Natural killer cell (primary cell): ENCODE measurements at regions of chr4 and their contacts with region 1.

Region 1: DNA sequence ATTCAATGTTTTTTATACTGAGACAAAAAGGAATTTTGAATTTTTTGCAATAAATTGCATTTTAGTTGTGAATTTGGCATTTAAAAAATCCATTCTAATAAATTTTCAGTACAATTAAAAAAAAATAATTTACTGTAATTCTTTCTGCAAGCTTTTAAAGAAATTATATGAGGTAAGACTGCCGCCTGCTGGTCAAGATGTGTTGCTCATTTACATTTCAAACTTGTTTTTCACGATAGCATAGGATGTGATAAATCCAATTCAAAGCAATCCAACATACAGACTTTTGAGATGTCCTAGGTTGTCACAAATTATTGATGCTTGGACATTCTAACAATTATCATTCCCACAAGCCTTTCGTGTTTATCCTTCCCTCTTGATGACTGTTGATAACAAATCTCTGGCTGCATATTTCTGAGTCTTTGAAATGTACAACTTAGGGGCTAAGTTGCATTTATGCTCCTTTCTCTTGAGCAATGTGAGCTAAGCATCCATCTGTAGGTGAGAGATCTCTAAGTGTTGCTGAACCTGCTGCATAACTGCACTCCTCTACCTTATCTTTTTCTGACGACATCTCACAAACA is 21.7 kb upstream of the MFAP3L start:
- DNase-seq: peak; percentile 31 to 80
- ATAC-seq: peak; percentile 54 to 60 (median 55)
- H3K4me3 ChIP-seq: no peak overlapping the region
- H3K4me3 Mint-ChIP-seq: no peak overlapping the region
- H3K27ac ChIP-seq: no peak overlapping the region
- H3K27ac Mint-ChIP-seq: no peak overlapping the region
- H3K4me1 ChIP-seq: no peaks in the 10 kb centered on the region
- H3K4me1 Mint-ChIP-seq: no peaks in the 10 kb centered on the region
- H3K27me3 ChIP-seq: no peaks in the 10 kb centered on the region
- H3K27me3 Mint-ChIP-seq: peaks cover 5 to 10% of the 10 kb centered on the region in 2 donors
- CTCF ChIP-seq: peak; percentile 79

Region 2: DNA sequence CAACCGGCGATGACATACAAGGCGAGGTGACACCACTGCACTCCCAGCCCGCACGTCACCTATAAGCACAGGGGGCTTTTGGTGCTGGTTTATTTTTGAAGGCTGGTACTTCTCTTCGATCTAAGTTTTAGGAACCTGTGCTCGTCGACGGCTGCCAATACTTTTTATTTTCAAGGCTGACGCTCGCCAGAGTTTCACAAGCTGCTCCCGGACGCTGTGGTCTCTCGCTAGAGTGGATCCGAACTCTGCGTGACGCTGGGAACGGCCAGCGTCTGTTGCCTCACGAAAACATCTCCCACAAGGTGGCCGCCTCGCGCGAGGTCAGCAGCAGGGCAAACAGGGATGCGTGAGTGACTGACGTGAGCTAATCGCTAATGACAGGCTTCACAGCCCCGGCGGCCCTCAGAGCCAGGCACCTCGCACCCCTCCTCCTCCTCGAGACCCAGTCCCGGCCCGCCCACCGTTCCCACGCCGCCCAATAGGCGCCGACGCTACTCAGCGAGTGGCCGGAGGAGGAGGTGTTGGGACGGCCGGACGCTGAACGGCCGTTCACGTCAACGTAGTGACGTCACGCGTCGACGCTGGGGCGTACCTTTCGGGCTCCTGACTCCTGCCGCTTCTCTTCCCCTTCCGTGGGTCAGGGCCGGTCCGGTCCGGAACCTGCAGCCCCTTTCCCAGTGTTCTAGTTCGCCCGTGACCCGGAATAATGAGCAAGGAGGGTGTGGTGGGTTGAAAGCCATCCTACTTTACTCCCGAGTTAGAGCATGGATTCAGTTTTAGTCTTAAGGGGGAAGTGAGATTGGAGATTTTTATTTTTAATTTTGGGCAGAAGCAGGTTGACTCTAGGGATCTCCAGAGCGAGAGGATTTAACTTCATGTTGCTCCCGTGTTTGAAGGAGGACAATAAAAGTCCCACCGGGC is 427.6 kb before region 1 on chr4 and contains the start of gene CLCN3:
- intact Hi-C with region 1: no loop called
- DNase-seq: peak; percentile 94
- ATAC-seq: peak; percentile 81 to 94 (median 86)
- H3K4me3 ChIP-seq: peak within 1 kb of the TSS; percentile 63
- H3K4me3 Mint-ChIP-seq: peak within 1 kb of the TSS; percentile 95
- H3K27ac ChIP-seq: peak within 1 kb of the TSS; percentile 97
- H3K27ac Mint-ChIP-seq: peak within 1 kb of the TSS; percentile 99 to 100
- H3K4me1 ChIP-seq: peaks cover 9% of the 10 kb centered on the region
- H3K4me1 Mint-ChIP-seq: peaks cover 50 to 55% of the 10 kb centered on the region in 2 donors
- H3K27me3 ChIP-seq: no peaks in the 10 kb centered on the region
- H3K27me3 Mint-ChIP-seq: no peaks in the 10 kb centered on the region
- CTCF ChIP-seq: no peak
- total RNA-seq, gene CLCN3: 20.7 to 26.0 (median 21.0) TPM

Region 3: DNA sequence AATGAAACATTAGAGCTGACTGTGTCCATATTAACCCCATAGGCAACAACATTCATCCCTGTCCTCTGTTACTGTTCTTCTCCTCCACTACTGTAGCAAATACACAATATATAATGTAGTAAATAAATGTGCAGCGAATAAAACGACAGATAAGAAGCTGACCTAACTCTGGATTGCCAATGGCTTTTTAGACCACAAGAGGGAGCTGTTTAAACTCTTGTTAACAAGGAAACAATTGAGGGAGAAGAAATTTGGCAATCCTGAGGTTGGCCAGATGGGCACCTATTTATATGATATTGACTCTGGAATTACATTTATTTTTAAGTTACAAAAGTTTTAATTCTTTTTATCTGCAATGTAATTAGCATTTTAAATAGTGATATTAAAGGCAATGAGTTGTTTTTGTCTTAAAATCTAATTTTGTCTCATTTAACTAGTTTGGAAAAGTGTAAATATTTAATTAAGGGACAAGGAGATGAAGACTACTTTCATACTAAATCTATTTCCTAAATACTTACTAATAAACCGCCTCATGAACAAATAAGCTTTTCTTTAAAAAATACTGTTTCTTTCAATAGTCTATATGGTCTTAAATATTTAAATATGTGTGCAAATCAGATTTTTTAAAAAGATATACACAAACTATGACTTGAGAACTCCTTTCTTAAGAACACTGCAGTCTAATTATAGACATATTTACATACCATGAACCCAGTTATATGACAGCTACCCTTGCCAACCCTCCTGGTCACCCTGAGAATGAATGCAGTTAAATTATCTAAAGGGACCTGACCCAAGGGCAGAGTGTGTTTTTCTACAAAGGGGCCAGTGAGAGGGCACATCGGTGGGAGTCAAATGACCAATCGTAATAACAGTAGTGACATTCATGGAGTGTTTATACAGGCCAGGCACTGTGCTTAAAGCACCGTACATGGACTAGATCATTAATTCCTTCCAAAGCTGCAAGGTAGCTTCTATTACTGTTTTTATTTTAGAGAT is 237.2 kb before region 1 on chr4:
- intact Hi-C with region 1: loop called (anchors 1 kb)
- DNase-seq: peak in 1 of 2 donors; percentile 74
- ATAC-seq: peak in 2 of 3 donors; percentile 46 to 59
- H3K4me3 ChIP-seq: no peak overlapping the region
- H3K4me3 Mint-ChIP-seq: no peak overlapping the region
- H3K27ac ChIP-seq: no peak overlapping the region
- H3K27ac Mint-ChIP-seq: no peak overlapping the region
- H3K4me1 ChIP-seq: no peaks in the 10 kb centered on the region
- H3K4me1 Mint-ChIP-seq: no peaks in the 10 kb centered on the region
- H3K27me3 ChIP-seq: no peaks in the 10 kb centered on the region
- H3K27me3 Mint-ChIP-seq: peaks cover 9% of the 10 kb centered on the region in 2 donors
- CTCF ChIP-seq: peak; percentile 86

Region 4: DNA sequence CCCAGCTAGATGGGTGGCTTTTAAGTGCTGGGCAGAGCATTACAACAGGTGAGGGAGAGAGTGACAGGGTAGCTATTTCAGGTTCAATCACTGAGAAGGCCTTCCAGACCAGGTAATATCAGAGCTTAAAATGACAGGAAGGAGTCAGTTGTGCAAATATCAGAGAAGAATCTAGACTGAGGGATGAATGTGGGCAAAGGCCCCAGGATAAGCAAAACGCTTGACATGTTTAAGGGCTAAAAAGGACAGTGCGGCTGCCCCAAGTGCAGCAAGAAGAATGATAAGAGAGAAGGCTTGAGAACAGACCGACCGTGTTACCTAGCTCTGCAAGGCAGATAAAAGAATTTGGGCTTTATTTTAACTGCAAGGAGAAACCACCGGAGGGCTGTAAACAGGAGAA is 23.3 kb after region 1 on chr4:
- intact Hi-C with region 1: no loop called
- DNase-seq: no peak
- ATAC-seq: no peak
- H3K4me3 ChIP-seq: no peak overlapping the region
- H3K4me3 Mint-ChIP-seq: no peak overlapping the region
- H3K27ac ChIP-seq: no peak overlapping the region
- H3K27ac Mint-ChIP-seq: no peak overlapping the region
- H3K4me1 ChIP-seq: no peaks in the 10 kb centered on the region
- H3K4me1 Mint-ChIP-seq: no peaks in the 10 kb centered on the region
- H3K27me3 ChIP-seq: no peaks in the 10 kb centered on the region
- H3K27me3 Mint-ChIP-seq: peaks cover 4 to 8% of the 10 kb centered on the region in 2 donors
- CTCF ChIP-seq: no peak